A549 (cell line): ENCODE measurements at regions of chr6 and their contacts with region 1.

Region 1: DNA sequence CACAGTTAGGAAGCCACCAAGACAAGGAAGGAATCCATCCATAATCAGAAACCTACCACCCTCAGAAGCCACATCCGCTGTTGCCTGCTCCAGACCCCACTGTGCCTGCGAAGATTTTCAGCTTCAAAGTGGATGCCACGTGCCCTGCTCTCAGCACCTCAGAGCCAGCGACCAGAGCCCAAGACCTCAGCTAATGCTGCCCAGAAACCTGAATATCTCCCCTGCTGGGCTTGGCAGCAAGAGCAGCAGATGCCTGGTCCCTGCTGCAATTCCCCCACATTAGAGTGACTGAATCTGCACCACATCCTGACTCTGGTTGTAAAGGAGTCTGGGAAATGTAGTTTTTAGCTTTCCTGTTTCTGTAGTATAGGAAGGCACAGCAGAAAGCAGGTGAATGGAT is 10.7 kb upstream of the ULBP3 start:
- DNase-seq: no peak
- ATAC-seq: peak; percentile 27 to 55; a peak in 3 of 6 replicates
- H3K4me3 ChIP-seq: no peak overlapping the region
- H3K27ac ChIP-seq: no peak overlapping the region
- H3K4me1 ChIP-seq: peaks cover 7% of the 10 kb centered on the region; the same call in 1 of the 3 replicates
- CTCF ChIP-seq: no peak
- EP300 ChIP-seq: no peak
- POLR2A ChIP-seq: no peak
- RAD21 ChIP-seq: no peak

Region 2: GRCh38 chr6:150068720-150069648 is 10.6 kb before region 1 on chr6 and contains the start of gene ULBP3:
- CTCF ChIA-PET with region 1: interaction called, 22 read pairs
- POLR2A ChIA-PET with region 1: no interaction called
- DNase-seq: peak; percentile 81 to 89
- ATAC-seq: peak; percentile 93 to 95
- H3K4me3 ChIP-seq: peak within 1 kb of the TSS; percentile 66
- H3K27ac ChIP-seq: peak within 1 kb of the TSS; percentile 78 to 96
- H3K4me1 ChIP-seq: peaks cover 14% of the 10 kb centered on the region
- CTCF ChIP-seq: peak; percentile 53
- EP300 ChIP-seq: no peak
- POLR2A ChIP-seq: peak; percentile 84
- RAD21 ChIP-seq: peak; percentile 23 to 43; a peak in 3 of 5 replicates
- polyA plus RNA-seq, gene ULBP3: 3.4 and 3.9 TPM in 2 replicates

Region 3: DNA sequence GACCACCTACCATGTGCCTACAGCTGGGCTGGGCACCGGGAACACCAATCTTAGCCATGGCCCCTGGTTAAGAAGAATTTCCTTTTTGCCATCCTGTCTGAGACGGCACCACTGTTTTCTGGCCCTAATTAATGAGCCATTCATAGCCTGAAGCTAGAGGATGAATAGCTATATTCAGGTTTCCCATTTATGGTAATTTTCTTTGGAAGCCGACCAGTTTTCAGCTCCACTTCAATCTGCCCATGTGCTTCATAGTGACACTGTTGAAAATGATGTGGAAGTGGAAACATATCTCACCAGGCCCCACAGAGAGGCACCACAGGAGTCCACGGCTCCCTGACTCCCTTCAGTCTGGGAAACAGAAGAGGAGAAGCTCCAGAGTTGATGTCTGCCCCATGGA is 11.9 kb after region 1 on chr6:
- CTCF ChIA-PET with region 1: interaction called, 22 read pairs
- POLR2A ChIA-PET with region 1: no interaction called
- DNase-seq: no peak
- ATAC-seq: no peak
- H3K4me3 ChIP-seq: no peak overlapping the region
- H3K27ac ChIP-seq: no peak overlapping the region
- H3K4me1 ChIP-seq: no peaks in the 10 kb centered on the region
- CTCF ChIP-seq: no peak
- EP300 ChIP-seq: no peak
- POLR2A ChIP-seq: no peak
- RAD21 ChIP-seq: no peak

Region 4: DNA sequence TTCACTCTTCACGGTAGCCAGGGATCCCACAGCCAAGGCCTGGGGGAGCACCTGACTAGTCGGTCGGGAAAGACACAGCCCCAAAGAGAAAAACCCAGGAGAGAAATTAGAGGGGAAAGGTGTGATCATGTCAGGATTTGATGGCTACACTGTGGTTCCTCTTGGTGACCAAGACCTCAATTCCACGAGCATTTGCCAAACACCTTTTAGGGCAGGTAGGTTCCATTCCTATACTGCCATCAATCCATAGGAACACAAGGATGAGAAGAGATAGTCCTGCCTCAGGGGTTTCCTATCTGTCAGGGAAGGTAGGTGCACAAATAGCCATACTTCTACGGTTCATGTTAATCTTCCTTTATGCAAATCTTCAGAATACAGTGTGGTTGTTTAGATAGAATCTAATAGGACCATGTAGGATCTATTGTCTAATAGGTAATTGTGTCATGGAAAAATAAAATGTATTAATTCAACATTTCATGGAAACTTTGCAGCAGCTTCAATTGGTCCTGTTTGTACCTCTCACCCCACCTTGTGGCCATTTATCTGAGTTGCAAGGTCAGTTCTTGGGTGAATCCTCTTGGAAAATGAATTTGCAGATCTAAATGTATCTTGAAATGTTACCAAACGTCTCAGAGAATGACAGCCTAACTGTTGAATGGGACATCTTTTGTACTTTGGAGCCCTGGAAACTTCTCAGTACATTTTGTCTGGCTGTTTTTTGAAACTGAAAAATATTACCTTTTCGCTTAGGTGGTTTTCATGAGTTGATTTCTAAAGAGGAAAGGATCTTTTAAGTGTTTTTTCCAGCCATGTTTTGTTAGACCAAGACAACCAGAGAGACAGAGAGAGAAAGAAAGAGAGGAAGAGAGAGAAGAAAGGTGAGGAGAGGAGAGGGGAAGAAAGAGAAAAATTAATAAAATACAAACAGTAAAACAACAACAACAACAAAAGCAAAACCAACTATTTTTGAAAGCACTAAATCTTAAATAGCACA is 255.5 kb after region 1 on chr6:
- CTCF ChIA-PET with region 1: interaction called, 19 read pairs
- POLR2A ChIA-PET with region 1: no interaction called
- DNase-seq: peak; percentile 40 to 72
- ATAC-seq: peak; percentile 47 to 59; a peak in 2 of 6 replicates
- H3K4me3 ChIP-seq: no peak overlapping the region
- H3K27ac ChIP-seq: no peak overlapping the region
- H3K4me1 ChIP-seq: no peaks in the 10 kb centered on the region
- CTCF ChIP-seq: peak; percentile 80
- EP300 ChIP-seq: no peak
- POLR2A ChIP-seq: no peak
- RAD21 ChIP-seq: peak; percentile 80 to 82

Region 5: DNA sequence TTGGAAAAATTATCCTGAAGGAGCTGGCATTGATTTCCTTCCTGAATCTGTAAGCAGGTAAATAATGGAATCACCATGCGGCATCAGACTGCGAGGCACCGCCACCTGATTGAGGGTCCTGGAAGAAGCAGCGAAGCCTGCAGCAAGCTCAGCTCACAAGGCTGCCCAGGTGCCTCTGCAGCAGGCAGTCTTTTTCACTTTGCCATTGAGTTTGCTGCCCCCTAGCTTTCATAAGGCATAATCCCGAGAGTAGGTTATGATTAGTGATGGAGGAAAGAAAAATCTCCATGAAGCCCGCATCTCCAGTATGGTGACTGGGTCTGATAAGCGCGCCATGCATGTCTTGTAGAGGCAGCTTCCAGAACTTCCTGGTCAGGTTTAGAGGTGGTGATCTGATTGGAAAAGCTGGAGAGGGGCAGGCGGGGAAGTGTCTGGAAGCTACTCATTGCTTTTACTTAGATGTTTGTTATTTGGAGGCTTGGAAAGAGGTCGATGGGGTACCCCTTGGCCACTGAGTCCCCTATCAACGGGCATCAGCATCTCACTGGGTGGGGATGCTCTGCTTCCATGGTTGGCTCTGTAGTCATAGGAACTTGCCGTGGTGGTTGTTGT is 315.9 kb after region 1 on chr6:
- CTCF ChIA-PET with region 1: interaction called, 39 read pairs
- POLR2A ChIA-PET with region 1: no interaction called
- DNase-seq: peak; percentile 47 to 61
- ATAC-seq: peak; percentile 87 to 96
- H3K4me3 ChIP-seq: no peak overlapping the region
- H3K27ac ChIP-seq: peak overlapping the region in 1 of 2 experiments; percentile 38; a peak in 1 of 6 replicates
- H3K4me1 ChIP-seq: peaks cover 23% of the 10 kb centered on the region
- CTCF ChIP-seq: peak; percentile 59
- EP300 ChIP-seq: no peak
- POLR2A ChIP-seq: no peak
- RAD21 ChIP-seq: peak; percentile 67 to 68